Gastrocnemius medialis (tissue), 4 donors: ENCODE measurements at regions of chr11 and their contacts with region 1.

Region 1: DNA sequence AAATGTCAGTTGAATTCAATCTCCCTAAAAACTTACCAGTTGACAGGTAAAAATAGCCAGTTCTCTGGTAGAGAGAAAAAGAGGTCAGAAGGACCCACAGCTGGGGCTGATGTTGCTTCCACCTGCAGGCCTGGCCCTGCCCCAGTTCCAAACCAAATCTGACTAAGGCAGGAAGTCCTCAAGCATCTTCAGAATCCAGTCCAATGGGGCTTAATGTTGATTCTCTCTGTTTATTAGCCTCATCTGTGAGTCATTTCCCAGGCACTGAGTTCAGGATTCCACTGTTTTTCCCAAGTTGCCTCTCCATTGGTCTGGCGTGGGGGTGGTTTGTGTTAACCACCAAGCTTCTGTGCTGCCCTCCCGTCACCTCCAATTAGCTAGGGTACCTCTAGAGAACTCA is 601.8 kb downstream of the INSC start:
- DNase-seq: peak in 1 of 2 donors; percentile 19
- ATAC-seq: peak in 1 of 2 donors; percentile 41
- H3K4me3 ChIP-seq: no peak overlapping the region
- H3K27ac ChIP-seq: no peak overlapping the region
- H3K4me1 ChIP-seq: no peaks in the 10 kb centered on the region
- H3K27me3 ChIP-seq: no peaks in the 10 kb centered on the region
- CTCF ChIP-seq: no peak
- POLR2A ChIP-seq: no peak

Region 2: GRCh38 chr11:15683528-15683927 is 33.0 kb before region 1 on chr11:
- in situ Hi-C with region 1: no loop called
- intact Hi-C with region 1: loop called (anchors 5 kb)
- DNase-seq: no peak
- ATAC-seq: no peak
- H3K4me3 ChIP-seq: no peak overlapping the region
- H3K27ac ChIP-seq: no peak overlapping the region
- H3K4me1 ChIP-seq: no peaks in the 10 kb centered on the region
- H3K27me3 ChIP-seq: no peaks in the 10 kb centered on the region
- CTCF ChIP-seq: no peak
- POLR2A ChIP-seq: no peak